ENCODE measurements at regions of chr2 and their contacts with region 1.

Region 1: GRCh38 chr2:30686000-30686399 is 121.2 kb downstream of the CAPN13 start:
- DNase-seq: no peak
- H3K4me3 ChIP-seq: no peak overlapping the region
- H3K27ac ChIP-seq: no peak overlapping the region
- H3K4me1 ChIP-seq: no peaks in the 10 kb centered on the region
- H3K27me3 ChIP-seq: no peaks in the 10 kb centered on the region
- CTCF ChIP-seq: peak; percentile 27 to 33

Region 2: DNA sequence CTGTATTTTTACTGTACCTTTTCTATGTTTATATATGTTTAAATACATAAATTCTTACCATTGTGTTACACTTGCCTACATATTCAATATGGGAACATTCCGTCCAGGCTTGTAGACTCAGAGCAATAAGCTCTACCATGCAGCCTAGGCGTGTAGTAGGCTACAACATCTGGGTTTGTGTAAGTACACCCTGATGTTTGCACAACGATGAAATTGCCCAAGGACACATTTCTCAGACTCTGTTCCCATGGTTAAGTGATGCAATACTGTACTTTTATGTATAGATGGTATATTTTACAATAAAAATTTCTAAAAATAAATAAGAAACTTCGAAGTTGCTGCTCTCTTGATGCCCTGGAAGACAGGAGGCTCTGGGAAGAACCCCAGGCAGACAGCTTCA is 500.8 kb before region 1 on chr2:
- CTCF ChIA-PET with region 1: no interaction called
- dilution Hi-C with region 1: loop called (anchors 10 kb)
- in situ Hi-C with region 1: no loop called
- intact Hi-C with region 1: no loop called
- DNase-seq: peak; percentile 47
- H3K4me3 ChIP-seq: no peak overlapping the region
- H3K27ac ChIP-seq: no peak overlapping the region
- H3K4me1 ChIP-seq: no peaks in the 10 kb centered on the region
- H3K27me3 ChIP-seq: peaks cover 4% of the 10 kb centered on the region
- CTCF ChIP-seq: no peak